ENCODE measurements at regions of chr2 and their contacts with region 1.

Region 1: DNA sequence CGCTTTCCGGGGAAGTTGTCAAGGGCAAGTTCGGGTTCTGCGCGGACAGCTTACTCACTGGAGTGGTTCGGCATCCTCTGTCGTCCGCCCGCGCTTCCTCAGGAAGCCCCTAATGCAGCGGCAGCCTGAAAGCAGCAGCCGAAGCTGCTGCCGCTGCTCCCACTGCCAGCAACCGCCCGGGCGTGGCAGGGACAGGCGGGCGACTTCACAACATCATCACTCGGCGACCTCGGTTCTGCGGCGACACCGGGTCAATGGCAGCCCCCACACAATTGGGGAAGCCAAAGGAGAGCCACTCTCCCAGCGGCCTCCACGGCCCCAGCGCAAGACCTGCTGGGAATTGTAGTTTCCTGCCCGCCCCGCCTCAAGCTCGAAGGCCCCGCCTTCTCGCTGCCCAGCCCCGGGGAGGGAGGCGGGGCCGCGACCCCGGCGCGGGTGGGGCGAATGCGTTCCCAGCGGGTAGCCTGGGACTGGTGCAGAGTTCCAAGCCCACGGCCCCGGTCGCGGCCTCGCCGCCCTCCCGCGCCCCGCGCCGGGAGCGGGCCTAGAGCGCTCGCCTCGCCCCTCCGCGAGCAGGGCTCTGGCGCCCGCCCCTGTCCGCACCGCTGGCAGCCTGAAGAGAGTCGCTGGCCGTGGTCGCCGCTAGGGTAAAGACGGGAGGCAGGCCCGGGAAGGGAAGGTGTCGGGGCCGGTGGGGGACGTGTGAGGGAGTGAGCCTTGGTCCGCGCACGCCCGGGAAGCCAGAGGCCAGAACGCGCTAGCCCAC is at the starts of genes STRADB and TRAK2:
- DNase-seq: peak; percentile 96 to 100 (median 97)

Region 2: GRCh38 chr2:200944467-200945394 is 506.7 kb before region 1 on chr2:
- intact Hi-C with region 1: no loop called
- DNase-seq: no peak

Region 3: DNA sequence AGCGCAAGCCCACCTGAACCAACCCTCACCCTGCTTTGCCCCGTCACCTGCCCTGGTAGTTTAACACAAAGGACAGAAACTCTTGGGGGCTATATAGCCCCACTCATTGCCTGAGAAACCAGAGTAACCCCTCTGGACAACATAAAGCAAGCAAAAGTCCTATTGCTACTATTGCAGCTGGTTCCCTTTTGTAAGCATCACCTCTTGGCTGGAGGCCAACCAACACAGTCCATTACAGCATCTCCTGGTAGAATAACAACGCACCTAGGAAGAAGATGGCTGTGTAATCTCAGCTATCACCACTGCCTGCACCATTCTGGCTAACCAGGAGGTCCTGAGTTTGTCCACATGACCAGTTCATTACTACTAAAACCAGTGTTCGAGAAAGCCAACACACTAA is 130.8 kb before region 1 on chr2:
- intact Hi-C with region 1: no loop called
- DNase-seq: no peak

Region 4: GRCh38 chr2:201642579-201643215 is 191.2 kb after region 1 on chr2:
- intact Hi-C with region 1: loop called (anchors 5 kb)
- DNase-seq: peak; percentile 77 to 97 (median 81)

Measured in posterior cingulate gyrus (tissue), 11 donors.